ENCODE measurements at regions of chr14 and their contacts with region 1.

Region 1: GRCh38 chr14:22955702-22956569 is 954 bp downstream of the HAUS4 start:
- DNase-seq: no peak

Region 2: DNA sequence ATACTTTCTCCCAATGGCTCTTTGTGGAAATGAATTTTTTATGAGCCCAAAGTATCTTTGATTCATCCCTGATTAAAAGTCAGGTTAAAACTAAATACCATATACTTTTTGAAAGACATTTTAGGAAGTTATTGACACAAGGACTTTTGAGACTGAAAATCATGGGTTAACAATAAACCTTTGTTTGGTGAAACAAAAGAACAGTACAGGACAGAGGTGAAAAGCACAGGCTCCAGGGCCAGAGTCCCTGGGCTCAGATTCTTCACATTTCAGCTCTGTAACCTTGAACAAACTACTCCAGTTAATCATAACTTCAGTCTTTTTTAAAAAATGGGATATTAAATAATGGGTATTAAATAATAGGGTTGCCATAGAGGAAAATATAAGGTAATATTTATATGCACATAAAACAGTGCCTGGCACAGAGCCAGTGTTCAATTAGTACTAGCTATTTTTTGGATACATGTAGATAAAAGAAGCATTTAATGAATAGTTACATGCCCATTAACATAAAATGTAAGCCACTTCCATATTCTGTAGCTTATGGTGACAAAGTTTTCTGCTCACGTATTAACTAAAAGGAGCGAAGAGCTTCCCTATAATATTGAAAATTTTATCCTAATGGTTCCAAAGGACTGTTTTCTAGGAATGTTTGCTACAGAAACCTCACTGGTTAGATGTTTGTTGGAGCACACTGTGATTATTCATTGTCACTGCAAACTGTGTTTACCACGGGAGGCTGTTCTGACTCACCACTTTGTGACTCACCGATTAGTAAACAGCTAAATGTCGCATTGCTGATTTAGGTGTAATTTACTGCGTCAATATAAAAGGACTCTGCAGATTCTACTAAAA is 622.3 kb before region 1 on chr14:
- CTCF ChIA-PET with region 1: no interaction called
- POLR2A ChIA-PET with region 1: no interaction called
- DNase-seq: no peak

Region 3: DNA sequence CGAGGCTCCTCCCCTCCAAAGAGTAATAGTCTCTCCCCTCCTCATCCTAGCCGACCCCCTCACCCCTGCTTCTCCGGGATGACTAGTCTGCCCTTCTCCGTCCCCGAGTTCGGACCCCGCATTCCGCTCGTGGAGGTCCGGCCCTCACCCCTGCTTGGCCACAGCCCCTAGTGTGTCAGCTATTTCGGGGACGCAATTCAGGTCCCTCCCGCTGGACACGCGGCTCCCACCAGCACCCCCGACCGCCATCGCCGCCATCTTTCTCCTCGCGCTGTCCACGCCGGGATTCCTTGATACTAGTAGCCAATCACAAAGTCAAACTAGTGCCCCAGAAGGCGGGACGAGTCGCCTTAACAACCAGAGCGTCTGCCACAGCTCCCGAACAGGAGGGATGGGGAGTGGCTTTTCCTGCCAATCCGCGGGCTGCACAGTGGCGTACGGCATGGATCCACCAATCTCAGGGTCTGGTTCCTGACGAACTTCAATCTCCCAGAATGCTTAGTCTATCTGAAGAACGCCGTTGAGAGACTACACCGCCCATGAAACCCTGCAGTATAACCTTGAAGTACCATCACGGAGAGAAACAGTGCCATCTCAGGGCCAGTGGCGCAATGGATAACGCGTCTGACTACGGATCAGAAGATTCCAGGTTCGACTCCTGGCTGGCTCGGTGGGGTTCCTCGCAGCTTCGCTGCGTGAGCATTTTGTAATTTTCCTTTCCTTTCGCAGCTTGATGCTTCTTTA is 26.7 kb before region 1 on chr14 and contains the start of gene PRMT5:
- CTCF ChIA-PET with region 1: interaction called, 5 read pairs
- POLR2A ChIA-PET with region 1: interaction called, 49 read pairs
- DNase-seq: peak; percentile 93

Region 4: DNA sequence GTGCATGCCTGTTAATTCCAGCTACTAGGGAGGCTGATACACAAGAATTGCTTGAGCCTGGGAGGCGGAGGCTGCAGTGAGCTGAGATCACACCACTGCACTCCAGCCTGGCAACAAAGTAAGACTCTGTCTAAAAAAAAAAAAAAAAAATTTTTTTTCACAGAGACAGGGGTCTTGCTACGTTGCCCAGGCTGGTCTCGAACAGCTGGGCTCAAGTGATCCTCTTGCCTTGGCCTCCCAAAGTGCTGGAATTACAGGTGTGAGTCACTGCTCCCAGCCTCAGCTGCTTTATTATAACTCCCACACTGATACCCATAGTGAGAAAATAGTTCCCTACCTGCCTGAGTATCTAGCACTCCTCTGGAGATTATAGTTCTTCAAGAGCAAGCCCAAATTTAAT is 10.3 kb before region 1 on chr14:
- CTCF ChIA-PET with region 1: interaction called, 4 read pairs
- POLR2A ChIA-PET with region 1: interaction called, 43 read pairs
- DNase-seq: no peak

Region 5: DNA sequence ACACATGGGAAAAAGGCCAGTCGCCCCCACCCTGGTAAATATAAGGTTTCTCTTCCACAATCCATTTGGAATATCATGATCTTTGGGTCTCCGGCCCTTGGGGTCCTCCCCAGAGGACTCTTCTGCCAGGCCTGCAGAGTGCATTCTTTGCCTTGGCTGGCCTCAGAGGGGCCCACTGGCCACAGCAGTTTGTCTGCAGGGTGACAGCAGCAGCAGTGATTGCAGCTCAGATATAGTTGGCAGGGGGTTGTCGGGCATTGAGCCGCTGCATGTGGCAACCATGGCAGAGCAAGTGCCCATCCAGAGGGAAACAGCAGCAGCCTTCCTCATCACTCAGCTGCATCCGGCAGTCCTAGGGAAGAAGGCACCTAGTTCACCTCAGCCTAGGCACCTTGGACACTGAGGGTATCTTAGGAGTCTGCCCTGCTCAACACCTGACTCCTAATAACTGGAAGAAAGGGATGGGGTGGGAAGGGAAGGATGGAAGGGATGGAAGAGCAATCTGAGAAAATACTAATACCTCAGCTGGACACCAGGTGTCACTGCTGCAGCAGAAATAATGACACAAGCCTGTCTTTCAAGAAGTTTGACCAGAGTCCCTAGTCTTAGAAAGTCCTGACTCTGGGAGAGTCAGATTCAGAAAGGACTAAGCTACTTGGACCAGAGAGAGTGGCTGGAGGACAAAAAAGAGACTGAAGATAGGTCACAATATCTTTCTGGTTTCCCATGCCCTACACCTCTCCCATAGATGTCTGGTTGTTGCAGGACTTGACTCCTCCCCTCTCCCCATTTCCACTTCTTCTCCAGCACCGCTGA is 17.5 kb after region 1 on chr14:
- CTCF ChIA-PET with region 1: interaction called, 6 read pairs
- POLR2A ChIA-PET with region 1: interaction called, 48 read pairs
- DNase-seq: peak; percentile 61

Region 6: GRCh38 chr14:22994762-22995275 is 38.9 kb after region 1 on chr14:
- CTCF ChIA-PET with region 1: interaction called, 6 read pairs
- POLR2A ChIA-PET with region 1: interaction called, 19 read pairs
- DNase-seq: peak; percentile 50